H1 (cell line): ENCODE measurements at regions of chr11 and their contacts with region 1.

Region 1: DNA sequence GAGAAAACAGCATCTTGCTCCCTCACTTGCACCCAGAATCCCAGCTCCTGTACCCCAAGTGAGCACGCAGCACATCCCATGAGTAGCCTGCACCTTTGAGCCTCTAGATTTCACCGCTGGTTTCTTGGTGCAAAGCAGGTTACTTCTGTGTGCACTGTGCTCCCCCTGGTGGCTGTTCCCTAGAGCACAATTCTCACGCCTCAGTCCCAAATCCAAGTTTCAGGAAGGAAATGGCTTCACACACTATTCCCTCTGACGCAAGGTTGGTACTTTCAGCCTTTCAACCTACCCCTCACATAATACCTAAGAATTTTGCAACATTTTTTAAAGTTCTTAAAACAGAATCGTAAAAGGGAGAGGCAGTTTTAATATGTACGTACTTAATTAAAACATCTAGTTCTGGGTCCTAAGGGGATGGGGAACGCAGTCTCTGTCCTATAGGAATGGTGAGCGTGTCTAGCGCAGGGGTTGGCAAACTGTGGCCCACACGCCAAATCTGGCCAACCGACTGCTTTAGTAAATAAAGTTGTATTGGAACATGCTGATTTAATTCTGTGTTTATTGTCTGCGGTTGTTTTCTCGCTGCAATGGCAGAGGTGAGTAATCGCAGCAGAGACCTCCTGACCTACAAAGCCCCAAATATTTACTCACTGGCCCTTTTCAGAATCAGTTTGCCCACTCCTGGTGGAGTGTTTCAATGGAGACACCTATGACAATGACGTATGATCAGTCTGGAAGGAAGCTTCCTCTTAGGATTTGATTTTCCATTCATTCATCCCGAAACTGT is 27.5 kb downstream of the DHCR7 start:
- DNase-seq: peak; percentile 44 to 80
- H3K4me3 ChIP-seq: no peak overlapping the region
- H3K27ac ChIP-seq: no peak overlapping the region
- H3K4me1 ChIP-seq: peaks cover 0 to 2% (median 0%) of the 10 kb centered on the region in 4 experiments; a peak in 2 of 7 replicates
- H3K27me3 ChIP-seq: no peaks in the 10 kb centered on the region
- CTCF ChIP-seq: peak; percentile 90 to 97 (median 94)
- EP300 ChIP-seq: no peak
- POLR2A ChIP-seq: no peak
- RAD21 ChIP-seq: peak; percentile 96 to 97

Region 2: DNA sequence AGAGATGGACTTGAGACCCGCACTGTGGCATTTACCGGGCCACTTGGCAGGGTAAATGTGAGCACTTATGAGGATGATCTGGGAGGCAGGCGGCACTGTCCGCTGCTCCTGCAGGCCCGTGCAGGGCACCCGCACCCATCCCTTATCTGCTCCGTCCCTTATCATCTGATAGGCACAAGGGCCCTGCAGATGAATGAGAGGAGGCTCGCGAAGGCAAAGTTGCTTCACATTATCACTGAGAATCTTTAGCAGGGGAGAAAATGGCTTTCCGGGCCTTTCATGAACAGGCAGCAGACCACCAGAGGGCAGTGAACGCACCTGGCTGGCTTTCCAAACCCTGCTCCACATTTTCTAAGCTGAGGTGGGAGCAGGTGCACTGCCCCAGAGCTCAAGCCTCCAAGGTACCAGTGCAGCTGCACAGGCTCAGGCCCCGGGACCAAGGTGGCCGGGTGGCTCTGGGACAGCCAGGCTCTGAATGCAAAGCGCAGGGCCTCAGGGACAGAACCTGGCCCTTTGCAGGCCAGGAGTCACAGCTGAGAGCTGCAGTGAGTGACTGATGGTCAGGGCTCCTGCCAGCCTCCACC is 333.9 kb before region 1 on chr11:
- CTCF ChIA-PET with region 1: interaction called, 10 read pairs
- POLR2A ChIA-PET with region 1: no interaction called
- DNase-seq: peak; percentile 31 to 78
- H3K4me3 ChIP-seq: no peak overlapping the region
- H3K27ac ChIP-seq: no peak overlapping the region
- H3K4me1 ChIP-seq: no peaks in the 10 kb centered on the region
- H3K27me3 ChIP-seq: no peaks in the 10 kb centered on the region
- CTCF ChIP-seq: peak; percentile 67 to 84 (median 78)
- EP300 ChIP-seq: no peak
- POLR2A ChIP-seq: no peak
- RAD21 ChIP-seq: peak; percentile 77 to 80

Region 3: GRCh38 chr11:71120490-71120896 is 300.2 kb before region 1 on chr11:
- CTCF ChIA-PET with region 1: interaction called, 24 read pairs
- POLR2A ChIA-PET with region 1: interaction called, 3 read pairs
- DNase-seq: peak; percentile 73 to 78
- H3K4me3 ChIP-seq: no peak overlapping the region
- H3K27ac ChIP-seq: no peak overlapping the region
- H3K4me1 ChIP-seq: peaks cover 0 to 6% (median 3%) of the 10 kb centered on the region in 4 experiments; a peak in 6 of 7 replicates
- H3K27me3 ChIP-seq: no peaks in the 10 kb centered on the region
- CTCF ChIP-seq: peak; percentile 79 to 92 (median 86)
- EP300 ChIP-seq: no peak
- POLR2A ChIP-seq: no peak
- RAD21 ChIP-seq: peak; percentile 96 to 97

Region 4: GRCh38 chr11:71372693-71373657 is 47.7 kb before region 1 on chr11:
- CTCF ChIA-PET with region 1: interaction called, 64 read pairs
- POLR2A ChIA-PET with region 1: no interaction called
- DNase-seq: no peak
- H3K4me3 ChIP-seq: no peak overlapping the region
- H3K27ac ChIP-seq: no peak overlapping the region
- H3K4me1 ChIP-seq: peaks cover 0 to 4% (median 3%) of the 10 kb centered on the region in 4 experiments; a peak in 2 of 7 replicates
- H3K27me3 ChIP-seq: no peaks in the 10 kb centered on the region; a peak in 3 of 7 replicates
- CTCF ChIP-seq: peak; percentile 17 to 54 (median 44)
- EP300 ChIP-seq: no peak
- POLR2A ChIP-seq: no peak
- RAD21 ChIP-seq: peak; percentile 72 to 79

Region 5: DNA sequence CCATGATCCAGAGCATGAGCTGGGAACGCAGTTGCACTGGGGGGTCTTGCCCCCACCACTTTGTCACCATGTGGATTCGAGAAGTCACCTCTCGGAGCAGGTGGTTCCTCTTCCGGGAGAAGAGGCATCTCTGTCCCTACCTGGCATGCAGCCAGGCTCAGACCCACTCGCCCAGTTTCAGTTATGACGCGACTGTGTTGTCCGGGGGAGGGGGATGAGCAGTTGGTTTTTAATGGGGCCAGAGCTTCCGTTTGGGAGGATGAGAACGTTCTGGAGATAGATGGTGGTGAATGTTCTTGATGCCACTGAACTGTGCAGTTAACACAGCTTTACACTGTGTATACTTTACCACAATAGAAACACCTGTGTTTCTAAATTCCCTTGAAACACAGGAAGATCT is 14.0 kb before region 1 on chr11:
- CTCF ChIA-PET with region 1: interaction called, 20 read pairs
- POLR2A ChIA-PET with region 1: no interaction called
- DNase-seq: no peak
- H3K4me3 ChIP-seq: no peak overlapping the region
- H3K27ac ChIP-seq: no peak overlapping the region
- H3K4me1 ChIP-seq: no peaks in the 10 kb centered on the region
- H3K27me3 ChIP-seq: no peaks in the 10 kb centered on the region; a peak in 1 of 7 replicates
- CTCF ChIP-seq: no peak
- EP300 ChIP-seq: no peak
- POLR2A ChIP-seq: no peak
- RAD21 ChIP-seq: no peak

Region 6: DNA sequence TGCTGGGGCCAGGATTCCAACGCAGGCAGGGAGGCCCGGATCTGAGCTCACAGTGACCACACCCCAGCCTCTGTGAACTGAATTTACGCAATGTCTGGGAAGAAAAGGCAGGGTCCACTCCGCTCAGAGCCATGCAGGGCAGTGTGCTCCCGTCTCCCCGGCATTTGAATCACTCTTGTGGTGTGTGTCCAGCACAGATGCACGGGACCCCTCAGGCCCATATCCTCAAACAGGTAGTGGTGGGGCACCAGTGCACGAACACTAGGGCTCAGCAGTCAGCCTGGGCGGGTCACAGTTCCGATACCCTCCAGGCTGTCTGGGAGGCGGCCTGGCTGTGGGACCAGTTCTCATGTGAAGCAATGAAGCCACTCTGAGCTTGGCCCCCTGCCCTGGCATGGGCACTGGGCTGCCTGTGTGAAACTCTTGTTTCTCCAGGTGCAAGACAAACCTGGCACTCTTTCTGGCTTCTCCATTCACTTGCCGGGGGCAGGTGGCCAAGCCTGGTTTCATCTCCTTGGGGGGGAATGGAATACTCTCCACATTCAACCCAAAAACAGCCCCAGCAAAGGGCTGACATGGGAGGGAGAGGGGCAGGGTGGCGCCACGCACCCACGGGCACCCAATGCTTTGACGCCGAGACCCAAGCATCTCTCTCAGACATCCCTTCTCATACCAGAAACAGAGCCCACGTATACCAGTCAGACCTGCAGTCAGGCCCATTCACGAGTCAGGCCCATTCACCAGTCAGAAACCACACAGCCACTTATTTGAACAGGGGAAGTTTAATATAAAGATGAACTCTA is 13.2 kb after region 1 on chr11:
- CTCF ChIA-PET with region 1: interaction called, 16 read pairs
- POLR2A ChIA-PET with region 1: interaction called, 3 read pairs
- DNase-seq: no peak
- H3K4me3 ChIP-seq: no peak overlapping the region
- H3K27ac ChIP-seq: no peak overlapping the region
- H3K4me1 ChIP-seq: no peaks in the 10 kb centered on the region
- H3K27me3 ChIP-seq: no peaks in the 10 kb centered on the region
- CTCF ChIP-seq: no peak
- EP300 ChIP-seq: no peak
- POLR2A ChIP-seq: no peak
- RAD21 ChIP-seq: no peak